Mammary epithelial cell (primary cell): ENCODE measurements at regions of chr4 and their contacts with region 1.

Region 1: DNA sequence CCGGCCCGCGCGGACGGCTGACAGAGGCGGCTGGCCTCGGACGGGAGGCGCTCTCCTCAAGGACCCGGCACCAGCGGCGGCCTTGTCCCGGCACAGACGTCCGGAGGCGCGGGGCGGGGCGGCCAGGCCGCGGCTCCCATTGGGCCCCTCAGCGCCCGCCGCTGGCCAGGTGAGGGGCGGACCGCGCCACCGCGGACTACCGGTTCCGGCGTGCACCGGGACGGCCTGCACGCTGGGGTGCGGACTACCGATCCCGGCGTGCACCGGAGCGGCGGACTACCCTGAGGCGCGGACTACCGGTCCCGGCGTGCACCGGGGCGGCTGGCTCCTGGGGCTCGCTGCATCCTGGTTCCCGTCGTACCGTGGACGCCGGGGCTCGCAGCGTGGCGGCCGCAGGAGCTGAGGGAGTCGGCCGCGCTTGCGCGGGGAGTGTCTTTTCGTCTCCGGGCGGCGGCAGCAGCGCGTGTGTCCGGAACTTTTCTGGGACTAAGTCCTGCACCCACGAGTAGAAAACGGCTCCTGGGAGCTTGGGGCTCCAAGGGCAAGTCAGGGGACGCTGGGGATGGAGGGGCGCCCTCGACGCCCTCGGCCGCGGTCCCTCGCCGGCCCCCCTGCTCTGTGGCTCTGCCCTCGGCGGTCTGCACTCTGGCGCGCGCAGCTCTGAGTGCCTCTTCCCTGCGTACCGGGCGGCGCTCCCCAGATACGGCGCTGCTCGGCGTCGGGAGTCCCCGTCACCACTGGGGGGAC is at the start of gene LETM1:
- DNase-seq: peak; percentile 96
- H3K4me3 ChIP-seq: peak within 1 kb of the TSS; percentile 82 to 88 (median 86)
- H3K27ac ChIP-seq: peak within 1 kb of the TSS; percentile 57
- H3K4me1 ChIP-seq: peaks cover 28% of the 10 kb centered on the region
- H3K27me3 ChIP-seq: no peaks in the 10 kb centered on the region
- CTCF ChIP-seq: no peak
- total RNA-seq, gene LETM1: 71.2 to 79.6 TPM

Region 2: GRCh38 chr4:1759818-1760223 is 96.4 kb before region 1 on chr4:
- CTCF ChIA-PET with region 1: no interaction called
- dilution Hi-C with region 1: loop called (anchors 5 kb)
- in situ Hi-C with region 1: no loop called
- intact Hi-C with region 1: no loop called
- DNase-seq: no peak
- H3K4me3 ChIP-seq: no peak overlapping the region
- H3K27ac ChIP-seq: no peak overlapping the region
- H3K4me1 ChIP-seq: peaks cover 14% of the 10 kb centered on the region
- H3K27me3 ChIP-seq: no peaks in the 10 kb centered on the region
- CTCF ChIP-seq: no peak

Region 3: DNA sequence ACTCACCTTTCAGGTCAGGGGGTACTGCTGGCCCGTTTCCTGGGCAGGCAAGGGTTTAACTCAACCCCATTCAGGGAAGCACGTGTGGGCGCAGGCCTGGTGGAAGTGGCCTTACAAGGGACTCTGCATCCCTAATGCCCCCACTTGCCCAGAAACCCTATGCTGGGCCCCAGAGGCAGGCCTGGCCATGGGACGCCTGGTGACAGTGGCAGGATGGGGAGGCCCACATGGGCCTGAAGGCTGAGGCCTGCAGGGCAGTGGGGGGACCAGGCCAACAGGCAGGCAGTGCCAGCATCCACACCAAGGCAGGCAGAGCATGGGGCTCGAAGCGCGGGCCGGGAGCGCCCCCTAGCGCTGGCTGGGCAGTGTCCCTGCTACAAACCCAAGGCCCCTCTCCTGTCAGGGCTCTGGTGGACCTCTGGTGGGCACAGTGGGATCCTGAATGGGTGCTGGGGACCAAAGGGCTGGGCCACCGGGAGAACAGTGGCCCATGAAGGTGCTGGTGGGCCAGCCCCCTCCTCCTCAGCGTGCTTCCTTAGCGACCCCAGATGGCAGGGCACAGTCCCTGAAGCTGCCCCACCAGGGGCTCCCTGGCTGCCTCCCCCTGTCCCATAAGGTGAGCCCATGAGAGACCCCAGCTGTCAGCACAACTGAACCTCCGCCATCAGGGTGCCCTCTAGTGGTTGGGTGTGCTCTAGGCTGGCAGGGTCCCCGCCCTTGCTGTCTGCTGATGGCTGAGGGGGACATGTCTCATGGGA is 46.3 kb before region 1 on chr4:
- CTCF ChIA-PET with region 1: no interaction called
- dilution Hi-C with region 1: loop called (anchors 5 kb)
- in situ Hi-C with region 1: no loop called
- intact Hi-C with region 1: no loop called
- DNase-seq: peak; percentile 37
- H3K4me3 ChIP-seq: no peak overlapping the region
- H3K27ac ChIP-seq: no peak overlapping the region
- H3K4me1 ChIP-seq: no peaks in the 10 kb centered on the region
- H3K27me3 ChIP-seq: no peaks in the 10 kb centered on the region
- CTCF ChIP-seq: peak; percentile 67 to 86

Region 4: GRCh38 chr4:1870578-1871443 is 14.6 kb after region 1 on chr4 and contains the start of gene NSD2:
- CTCF ChIA-PET with region 1: no interaction called
- dilution Hi-C with region 1: no loop called
- in situ Hi-C with region 1: no loop called
- intact Hi-C with region 1: loop called (anchors 2 kb)
- DNase-seq: peak; percentile 83
- H3K4me3 ChIP-seq: peak within 1 kb of the TSS; percentile 72 to 86 (median 79)
- H3K27ac ChIP-seq: peak within 1 kb of the TSS; percentile 87
- H3K4me1 ChIP-seq: peaks cover 21% of the 10 kb centered on the region
- H3K27me3 ChIP-seq: no peaks in the 10 kb centered on the region
- CTCF ChIP-seq: no peak
- total RNA-seq, gene NSD2: 23.2 to 68.8 TPM

Region 5: GRCh38 chr4:1960170-1960825 is 104.1 kb after region 1 on chr4:
- CTCF ChIA-PET with region 1: no interaction called
- dilution Hi-C with region 1: loop called (anchors 5 kb)
- in situ Hi-C with region 1: no loop called
- intact Hi-C with region 1: no loop called
- DNase-seq: no peak
- H3K4me3 ChIP-seq: no peak overlapping the region
- H3K27ac ChIP-seq: no peak overlapping the region
- H3K4me1 ChIP-seq: peaks cover 4% of the 10 kb centered on the region
- H3K27me3 ChIP-seq: no peaks in the 10 kb centered on the region
- CTCF ChIP-seq: no peak